Head of caudate nucleus (tissue), 42 donors: ENCODE measurements at regions of chr21 and their contacts with region 1.

Region 1: GRCh38 chr21:44011980-44012527 is at the start of gene TRAPPC10:
- DNase-seq: peak; percentile 27 to 94 (median 87)

Region 2: GRCh38 chr21:44065428-44065827 is 53.4 kb after region 1 on chr21:
- intact Hi-C with region 1: loop called (anchors 10 kb)
- DNase-seq: peak in 4 of 42 donors; percentile 32 to 38 (median 34)